CD8-positive, alpha-beta T cell (primary cell): ENCODE measurements at regions of chr16 and their contacts with region 1.

Region 1: DNA sequence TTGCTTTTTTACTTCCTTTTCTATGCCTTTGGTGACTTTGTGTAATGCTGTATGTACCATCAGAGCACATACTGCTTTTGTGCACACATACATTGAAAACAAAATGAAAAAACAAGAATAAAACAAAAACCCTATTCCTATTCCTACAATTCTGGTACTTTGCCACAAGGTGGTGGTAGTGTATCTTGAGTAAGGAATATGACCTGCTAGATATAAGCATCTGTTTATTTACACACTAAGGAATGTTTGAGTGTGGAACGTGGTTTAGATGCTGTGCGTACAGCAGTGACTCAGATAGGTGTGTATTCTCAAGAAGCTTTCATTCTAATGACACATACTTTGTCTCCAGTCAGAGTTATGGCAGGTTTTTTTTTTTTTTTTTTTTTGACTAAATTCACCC is 606.2 kb downstream of the WWOX start:
- DNase-seq: peak in 2 of 9 experiments; percentile 53 to 69
- ATAC-seq: peak; percentile 69
- H3K4me3 ChIP-seq: no peak overlapping the region
- H3K4me3 Mint-ChIP-seq: no peak overlapping the region
- H3K27ac ChIP-seq: no peak overlapping the region
- H3K27ac Mint-ChIP-seq: no peak overlapping the region
- H3K4me1 ChIP-seq: no peaks in the 10 kb centered on the region
- H3K4me1 Mint-ChIP-seq: peaks cover 6% of the 10 kb centered on the region
- H3K27me3 ChIP-seq: no peaks in the 10 kb centered on the region
- H3K27me3 Mint-ChIP-seq: no peaks in the 10 kb centered on the region
- CTCF ChIP-seq: peak; percentile 46

Region 2: GRCh38 chr16:78742501-78743283 is 37.0 kb after region 1 on chr16:
- CTCF ChIA-PET with region 1: no interaction called
- POLR2A ChIA-PET with region 1: no interaction called
- intact Hi-C with region 1: loop called in 1 of 2 experiments (anchors 5 kb)
- DNase-seq: peak; percentile 47 to 90 (median 77)
- ATAC-seq: peak; percentile 93
- H3K4me3 ChIP-seq: peak overlapping the region; percentile 6 to 34
- H3K4me3 Mint-ChIP-seq: peak overlapping the region; percentile 78
- H3K27ac ChIP-seq: peak overlapping the region; percentile 66 to 90
- H3K27ac Mint-ChIP-seq: peak overlapping the region; percentile 97
- H3K4me1 ChIP-seq: peaks cover 20% of the 10 kb centered on the region
- H3K4me1 Mint-ChIP-seq: peaks cover 32% of the 10 kb centered on the region
- H3K27me3 ChIP-seq: no peaks in the 10 kb centered on the region
- H3K27me3 Mint-ChIP-seq: no peaks in the 10 kb centered on the region
- CTCF ChIP-seq: no peak

Region 3: DNA sequence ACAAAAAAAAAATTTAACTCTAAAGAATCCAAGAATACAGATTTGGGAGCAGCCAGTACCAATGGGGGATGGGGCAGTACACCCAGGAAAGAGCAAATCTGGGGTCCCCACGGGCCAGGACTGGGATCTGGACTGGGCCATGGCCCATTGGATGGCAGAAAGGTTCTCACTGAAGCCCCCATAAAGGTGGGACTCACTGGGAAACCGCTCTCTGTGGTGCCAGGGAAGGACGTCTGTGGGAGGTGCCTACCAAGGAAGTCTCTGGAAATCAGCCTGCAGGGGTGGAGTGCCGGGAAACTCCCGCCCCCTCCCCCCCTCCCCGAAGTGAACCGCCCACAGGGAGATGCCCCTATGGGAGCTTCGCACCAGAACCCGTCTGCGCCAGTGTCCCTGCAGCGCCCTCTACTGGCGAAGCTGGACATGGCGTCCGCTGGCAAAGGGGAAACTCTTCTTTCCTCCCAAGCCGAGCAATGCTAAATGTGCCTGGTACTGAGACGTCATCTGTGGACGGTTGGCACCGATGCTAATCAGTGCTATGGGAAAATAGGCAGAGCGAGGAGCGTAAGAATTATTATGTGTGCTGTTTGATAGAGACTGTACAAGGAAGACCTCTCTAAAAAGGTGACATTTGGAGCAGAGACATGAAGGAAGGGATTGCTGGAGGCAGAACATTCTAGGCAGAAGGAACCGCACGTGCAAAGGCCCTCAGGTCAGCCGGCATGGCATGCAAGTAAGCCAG is 64.8 kb after region 1 on chr16:
- CTCF ChIA-PET with region 1: interaction called, 18 read pairs
- POLR2A ChIA-PET with region 1: no interaction called
- intact Hi-C with region 1: loop called (anchors 1 kb)
- DNase-seq: peak; percentile 66 to 87 (median 78)
- ATAC-seq: peak; percentile 78
- H3K4me3 ChIP-seq: no peak overlapping the region
- H3K4me3 Mint-ChIP-seq: no peak overlapping the region
- H3K27ac ChIP-seq: peak overlapping the region in 1 of 2 experiments; percentile 12
- H3K27ac Mint-ChIP-seq: peak overlapping the region; percentile 66
- H3K4me1 ChIP-seq: peaks cover 5% of the 10 kb centered on the region
- H3K4me1 Mint-ChIP-seq: peaks cover 16% of the 10 kb centered on the region
- H3K27me3 ChIP-seq: no peaks in the 10 kb centered on the region
- H3K27me3 Mint-ChIP-seq: peaks cover 3% of the 10 kb centered on the region
- CTCF ChIP-seq: peak; percentile 95

Region 4: GRCh38 chr16:79047229-79047983 is 341.7 kb after region 1 on chr16:
- CTCF ChIA-PET with region 1: no interaction called
- POLR2A ChIA-PET with region 1: no interaction called
- intact Hi-C with region 1: loop called in 1 of 2 experiments (anchors 5 kb)
- DNase-seq: peak in 2 of 9 experiments; percentile 28 to 40
- ATAC-seq: no peak
- H3K4me3 ChIP-seq: no peak overlapping the region
- H3K4me3 Mint-ChIP-seq: no peak overlapping the region
- H3K27ac ChIP-seq: no peak overlapping the region
- H3K27ac Mint-ChIP-seq: no peak overlapping the region
- H3K4me1 ChIP-seq: peaks cover 9% of the 10 kb centered on the region
- H3K4me1 Mint-ChIP-seq: peaks cover 21% of the 10 kb centered on the region
- H3K27me3 ChIP-seq: no peaks in the 10 kb centered on the region
- H3K27me3 Mint-ChIP-seq: no peaks in the 10 kb centered on the region
- CTCF ChIP-seq: no peak